ENCODE measurements at regions of chr9 and their contacts with region 1.

Region 1: DNA sequence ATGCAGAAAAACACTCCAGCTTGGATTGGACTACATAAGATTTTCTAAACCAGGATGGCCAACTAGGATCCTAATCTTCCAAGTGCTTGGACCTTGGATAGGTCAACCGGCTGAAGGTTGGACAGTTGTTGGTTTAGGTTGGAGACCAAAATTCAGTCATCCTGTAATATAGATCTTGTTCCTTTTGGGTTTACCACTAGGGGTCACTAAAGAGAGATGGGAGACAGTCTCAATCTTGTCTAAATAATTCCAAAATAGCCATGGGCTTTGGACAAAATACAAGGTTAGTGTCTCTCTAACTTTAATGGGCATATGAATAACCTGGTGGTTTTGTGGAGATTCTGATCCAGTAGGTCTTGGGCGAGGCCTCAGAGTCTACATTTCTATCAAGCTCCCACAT is 148.7 kb upstream of the ERCC6L2 start:
- DNase-seq: no peak
- H3K4me3 Mint-ChIP-seq: no peak overlapping the region
- H3K27ac Mint-ChIP-seq: no peak overlapping the region
- H3K4me1 Mint-ChIP-seq: peaks cover 41% of the 10 kb centered on the region
- H3K27me3 Mint-ChIP-seq: peaks cover 14% of the 10 kb centered on the region

Region 2: DNA sequence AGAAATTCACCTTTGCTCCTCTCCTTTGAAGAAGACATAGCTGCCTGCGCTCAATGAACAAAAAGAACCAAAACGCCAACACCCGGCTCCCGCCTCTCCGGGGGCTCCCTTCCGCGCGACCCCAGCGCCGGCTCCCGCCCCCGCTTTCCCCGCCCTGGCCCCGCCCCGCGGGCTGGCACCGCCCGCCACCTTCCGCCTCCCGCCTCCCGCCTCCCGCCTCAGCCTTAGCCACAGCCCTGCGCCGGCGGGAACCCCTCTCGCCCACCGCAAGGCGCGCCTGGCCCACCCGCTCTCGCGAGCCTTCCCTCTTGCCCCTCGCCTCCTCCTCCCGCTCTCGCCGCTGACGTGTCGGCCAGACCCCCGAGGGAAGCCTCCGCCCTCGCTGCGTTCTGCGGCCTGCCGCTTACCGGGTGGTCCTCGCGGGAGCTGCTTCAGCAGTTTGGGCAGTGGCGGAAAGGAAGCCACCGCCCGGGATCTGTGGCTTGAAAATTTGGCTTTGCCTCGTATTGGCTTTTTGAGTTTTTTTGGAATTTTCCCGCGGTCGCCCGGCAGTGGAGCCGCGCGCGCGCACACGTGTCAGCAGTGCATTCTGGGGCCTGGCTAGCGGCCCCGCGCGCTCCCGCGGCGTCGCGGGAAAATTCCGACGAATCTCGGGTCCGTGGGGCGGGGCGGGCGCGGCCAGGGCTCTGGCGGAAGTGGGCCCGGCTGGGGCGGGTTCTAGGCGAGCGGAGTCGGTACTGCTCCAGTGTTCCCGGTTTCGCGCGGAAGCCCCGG is 409.4 kb before region 1 on chr9 and contains the start of gene FANCC:
- intact Hi-C with region 1: loop called (anchors 5 kb)
- DNase-seq: peak; percentile 84
- H3K4me3 Mint-ChIP-seq: peak within 1 kb of the TSS; percentile 91
- H3K27ac Mint-ChIP-seq: peak within 1 kb of the TSS; percentile 95
- H3K4me1 Mint-ChIP-seq: peaks cover 25% of the 10 kb centered on the region
- H3K27me3 Mint-ChIP-seq: peaks cover 12% of the 10 kb centered on the region
- total RNA-seq, gene FANCC: 18.7 and 23.7 TPM in 2 replicates

Region 3: DNA sequence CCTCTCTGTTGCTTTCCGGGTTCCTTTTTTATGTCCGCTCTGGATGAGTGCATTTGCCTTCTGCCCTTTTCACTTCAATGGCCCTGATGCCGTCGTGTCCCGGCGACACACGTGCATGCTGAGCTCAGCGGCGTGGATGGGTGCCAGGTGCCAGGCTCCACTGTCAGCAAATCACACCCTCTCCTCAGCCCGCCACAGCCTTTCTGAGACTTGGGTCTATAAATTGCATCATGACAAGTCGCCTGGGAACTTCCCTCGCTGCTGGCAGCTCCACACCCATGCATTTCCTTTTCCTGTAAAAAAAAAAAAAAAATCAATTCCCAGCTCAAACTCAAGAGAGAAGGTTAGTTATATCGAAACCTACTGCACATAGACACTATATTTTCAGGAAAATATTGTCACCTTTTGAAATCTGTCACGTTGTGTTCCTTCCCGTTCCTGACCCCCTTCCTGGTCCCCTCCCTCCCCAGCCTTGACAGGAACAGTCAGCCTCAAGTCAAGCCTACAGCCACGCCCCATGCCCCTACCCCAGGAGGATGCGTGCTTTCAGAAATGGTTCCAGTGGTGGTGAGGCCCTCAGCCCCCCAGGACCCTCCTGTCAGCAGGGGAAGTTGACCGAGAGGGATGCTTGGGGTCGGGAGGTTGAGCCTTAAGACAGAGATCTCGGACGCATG is 99.7 kb before region 1 on chr9:
- intact Hi-C with region 1: loop called (anchors 1 kb)
- DNase-seq: peak; percentile 51
- H3K4me3 Mint-ChIP-seq: peak overlapping the region; percentile 45
- H3K27ac Mint-ChIP-seq: peak overlapping the region; percentile 67
- H3K4me1 Mint-ChIP-seq: peaks cover 27% of the 10 kb centered on the region
- H3K27me3 Mint-ChIP-seq: peaks cover 5% of the 10 kb centered on the region

Region 4: DNA sequence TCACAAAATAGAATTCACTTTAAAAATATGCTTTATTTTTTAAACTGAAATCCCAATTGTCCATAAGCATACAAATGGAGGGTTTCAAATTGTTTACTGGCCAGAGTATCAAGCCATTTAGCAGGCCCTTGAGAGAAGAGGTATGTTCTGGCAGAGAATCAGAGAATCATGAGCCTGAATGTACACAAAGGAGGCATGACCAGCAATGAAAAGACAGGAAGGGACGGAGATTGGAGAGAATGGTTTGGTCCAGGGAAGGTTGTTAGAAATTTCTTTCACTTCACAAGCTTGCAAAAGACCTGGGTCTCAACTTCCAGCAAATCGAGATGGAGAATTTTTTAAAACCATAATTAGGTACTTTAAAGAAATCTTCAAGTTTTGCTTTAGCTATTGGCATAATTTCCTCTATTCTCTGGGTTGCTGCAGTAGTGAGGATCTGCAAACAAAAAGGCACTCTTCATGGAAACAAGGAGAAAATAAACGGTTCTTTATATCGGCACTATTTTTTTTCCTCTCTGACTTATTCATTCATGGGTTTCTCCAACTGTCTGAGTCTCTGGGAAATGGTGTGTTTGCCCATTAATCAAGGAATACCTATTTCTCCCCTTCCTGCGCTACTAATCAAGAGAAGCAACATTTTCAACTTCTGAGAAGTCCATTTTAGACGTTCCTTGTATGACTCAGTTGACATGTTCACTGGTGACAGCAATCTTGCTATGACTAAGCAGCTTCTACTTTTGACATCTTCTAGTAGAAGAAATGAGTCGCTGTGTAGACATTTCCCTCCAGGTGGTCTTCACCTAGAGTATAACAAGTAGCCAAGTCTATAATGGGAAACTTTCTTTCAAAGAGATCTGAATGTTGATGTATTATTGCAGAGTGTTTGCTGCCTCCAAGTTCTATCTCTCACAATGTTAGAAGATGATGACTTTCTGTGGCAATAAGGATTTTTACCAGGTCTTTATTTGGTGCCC is 125.6 kb after region 1 on chr9:
- intact Hi-C with region 1: loop called (anchors 1 kb)
- DNase-seq: peak; percentile 27
- H3K4me3 Mint-ChIP-seq: peak overlapping the region; percentile 27
- H3K27ac Mint-ChIP-seq: peak overlapping the region; percentile 10
- H3K4me1 Mint-ChIP-seq: peaks cover 39% of the 10 kb centered on the region
- H3K27me3 Mint-ChIP-seq: no peaks in the 10 kb centered on the region

Region 5: GRCh38 chr9:96150324-96151227 is 423.8 kb after region 1 on chr9:
- intact Hi-C with region 1: loop called (anchors 1 kb)
- DNase-seq: peak; percentile 42
- H3K4me3 Mint-ChIP-seq: peak overlapping the region; percentile 47
- H3K27ac Mint-ChIP-seq: peak overlapping the region; percentile 65
- H3K4me1 Mint-ChIP-seq: peaks cover 38% of the 10 kb centered on the region
- H3K27me3 Mint-ChIP-seq: peaks cover 15% of the 10 kb centered on the region